CD4-positive, alpha-beta memory T cell (primary cell): ENCODE measurements at regions of chr12 and their contacts with region 1.

Region 1: DNA sequence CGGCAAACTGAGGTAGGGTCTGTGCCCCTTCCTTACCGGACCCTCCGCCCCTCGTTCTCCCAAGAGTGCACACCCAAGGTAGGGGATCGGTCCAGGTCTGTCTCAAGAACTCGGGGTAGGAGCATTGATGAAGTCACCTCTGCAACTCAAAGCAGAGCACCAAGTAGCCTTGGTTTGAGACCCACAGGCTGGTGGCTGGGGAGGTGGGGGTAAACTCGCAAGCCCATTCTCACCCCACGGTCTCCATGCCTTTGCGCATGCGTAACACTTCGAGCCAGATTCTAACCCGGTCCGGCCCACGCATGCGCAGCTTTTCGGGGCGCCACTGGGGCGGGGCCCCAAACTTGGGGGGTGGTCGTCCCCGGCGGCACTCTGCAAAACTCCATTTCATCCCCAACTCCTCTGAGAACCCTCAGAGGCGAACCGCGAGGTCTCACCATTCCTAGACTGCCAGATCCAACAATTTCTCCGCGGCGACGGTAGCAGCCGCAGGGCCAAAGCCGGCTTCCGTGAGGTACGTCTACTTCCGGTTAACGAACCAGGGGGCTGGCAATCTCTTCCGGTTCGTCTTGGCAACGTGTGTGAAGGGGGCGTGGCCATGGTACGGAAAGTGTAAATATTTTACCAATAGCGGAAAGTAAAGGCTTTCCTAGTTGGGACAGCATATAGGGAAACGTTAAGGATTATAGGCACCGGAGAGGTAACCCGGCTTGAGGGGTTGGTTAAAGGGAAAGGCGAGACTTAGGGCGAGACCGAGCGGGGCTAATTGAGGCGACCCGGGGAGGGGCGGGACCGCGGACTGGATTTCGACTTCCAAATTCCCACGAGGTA is at the start of gene MCRS1:
- DNase-seq: peak; percentile 92 to 94 (median 93)
- H3K4me3 ChIP-seq: peak within 1 kb of the TSS; percentile 88 to 100
- H3K4me3 Mint-ChIP-seq: peak within 1 kb of the TSS; percentile 92 to 100 (median 99)
- H3K27ac ChIP-seq: peak within 1 kb of the TSS; percentile 89
- H3K27ac Mint-ChIP-seq: peak within 1 kb of the TSS; percentile 93 to 100 (median 99)
- H3K4me1 ChIP-seq: peaks cover 49% of the 10 kb centered on the region
- H3K4me1 Mint-ChIP-seq: peaks cover 32 to 71% (median 54%) of the 10 kb centered on the region in 4 donors
- H3K27me3 ChIP-seq: no peaks in the 10 kb centered on the region
- H3K27me3 Mint-ChIP-seq: no peaks in the 10 kb centered on the region
- total RNA-seq, gene MCRS1: 77.0 to 78.4 TPM

Region 2: DNA sequence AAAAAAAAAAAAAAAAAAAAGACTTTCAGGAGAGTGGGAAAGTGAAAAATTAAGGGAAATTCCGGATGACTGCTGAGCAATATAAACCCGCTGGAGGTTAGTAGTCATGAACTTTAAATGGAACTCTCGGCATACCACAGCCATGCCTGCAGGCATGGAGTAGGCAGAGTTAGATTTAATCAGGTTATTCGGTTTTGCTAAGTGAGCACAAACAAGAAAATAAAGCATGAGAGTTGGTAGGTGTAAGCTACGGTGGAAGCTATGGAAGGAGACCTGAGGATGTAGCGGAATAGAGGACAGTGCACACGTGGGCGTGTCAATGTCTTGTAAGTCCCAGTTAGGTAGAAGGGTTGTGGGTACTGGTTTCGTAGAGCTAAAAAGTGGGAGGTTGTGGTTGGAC is 314.7 kb before region 1 on chr12:
- CTCF ChIA-PET with region 1: no interaction called
- POLR2A ChIA-PET with region 1: no interaction called
- intact Hi-C with region 1: no loop called
- DNase-seq: no peak
- H3K4me3 ChIP-seq: no peak overlapping the region
- H3K4me3 Mint-ChIP-seq: no peak overlapping the region
- H3K27ac ChIP-seq: no peak overlapping the region
- H3K27ac Mint-ChIP-seq: no peak overlapping the region
- H3K4me1 ChIP-seq: no peaks in the 10 kb centered on the region
- H3K4me1 Mint-ChIP-seq: peaks cover 0 to 1% (median under 1%) of the 10 kb centered on the region in 4 donors
- H3K27me3 ChIP-seq: no peaks in the 10 kb centered on the region
- H3K27me3 Mint-ChIP-seq: peaks cover 0 to 2% of the 10 kb centered on the region in 2 donors

Region 3: GRCh38 chr12:49538510-49539403 is 29.1 kb before region 1 on chr12 and contains the start of gene KCNH3:
- CTCF ChIA-PET with region 1: interaction called, 3 read pairs
- POLR2A ChIA-PET with region 1: interaction called, 19 read pairs
- intact Hi-C with region 1: loop called (anchors 1 kb)
- DNase-seq: peak; percentile 86 to 95 (median 88)
- H3K4me3 ChIP-seq: peak within 1 kb of the TSS; percentile 62 to 69
- H3K4me3 Mint-ChIP-seq: peak within 1 kb of the TSS; percentile 73 to 85 (median 79)
- H3K27ac ChIP-seq: no peak within 1 kb of the TSS
- H3K27ac Mint-ChIP-seq: peak within 1 kb of the TSS in 6 of 7 donors; percentile 46 to 70 (median 66)
- H3K4me1 ChIP-seq: peaks cover 21% of the 10 kb centered on the region
- H3K4me1 Mint-ChIP-seq: peaks cover 8 to 38% (median 19%) of the 10 kb centered on the region in 4 donors
- H3K27me3 ChIP-seq: no peaks in the 10 kb centered on the region
- H3K27me3 Mint-ChIP-seq: peaks cover 0 to 5% of the 10 kb centered on the region in 2 donors
- total RNA-seq, gene KCNH3: 1.3 to 2.4 TPM

Region 4: GRCh38 chr12:49553512-49554088 is 14.2 kb before region 1 on chr12:
- CTCF ChIA-PET with region 1: interaction called, 10 read pairs
- POLR2A ChIA-PET with region 1: interaction called, 10 read pairs
- intact Hi-C with region 1: loop called (anchors 1 kb)
- DNase-seq: peak in 4 of 5 donors; percentile 37 to 59 (median 50)
- H3K4me3 ChIP-seq: no peak overlapping the region
- H3K4me3 Mint-ChIP-seq: no peak overlapping the region
- H3K27ac ChIP-seq: no peak overlapping the region
- H3K27ac Mint-ChIP-seq: peak overlapping the region in 3 of 7 donors; percentile 14 to 54 (median 21)
- H3K4me1 ChIP-seq: peaks cover 4% of the 10 kb centered on the region
- H3K4me1 Mint-ChIP-seq: peaks cover 5 to 11% (median 8%) of the 10 kb centered on the region in 4 donors
- H3K27me3 ChIP-seq: peaks cover 3% of the 10 kb centered on the region
- H3K27me3 Mint-ChIP-seq: peaks cover 3 to 12% of the 10 kb centered on the region in 2 donors

Region 5: DNA sequence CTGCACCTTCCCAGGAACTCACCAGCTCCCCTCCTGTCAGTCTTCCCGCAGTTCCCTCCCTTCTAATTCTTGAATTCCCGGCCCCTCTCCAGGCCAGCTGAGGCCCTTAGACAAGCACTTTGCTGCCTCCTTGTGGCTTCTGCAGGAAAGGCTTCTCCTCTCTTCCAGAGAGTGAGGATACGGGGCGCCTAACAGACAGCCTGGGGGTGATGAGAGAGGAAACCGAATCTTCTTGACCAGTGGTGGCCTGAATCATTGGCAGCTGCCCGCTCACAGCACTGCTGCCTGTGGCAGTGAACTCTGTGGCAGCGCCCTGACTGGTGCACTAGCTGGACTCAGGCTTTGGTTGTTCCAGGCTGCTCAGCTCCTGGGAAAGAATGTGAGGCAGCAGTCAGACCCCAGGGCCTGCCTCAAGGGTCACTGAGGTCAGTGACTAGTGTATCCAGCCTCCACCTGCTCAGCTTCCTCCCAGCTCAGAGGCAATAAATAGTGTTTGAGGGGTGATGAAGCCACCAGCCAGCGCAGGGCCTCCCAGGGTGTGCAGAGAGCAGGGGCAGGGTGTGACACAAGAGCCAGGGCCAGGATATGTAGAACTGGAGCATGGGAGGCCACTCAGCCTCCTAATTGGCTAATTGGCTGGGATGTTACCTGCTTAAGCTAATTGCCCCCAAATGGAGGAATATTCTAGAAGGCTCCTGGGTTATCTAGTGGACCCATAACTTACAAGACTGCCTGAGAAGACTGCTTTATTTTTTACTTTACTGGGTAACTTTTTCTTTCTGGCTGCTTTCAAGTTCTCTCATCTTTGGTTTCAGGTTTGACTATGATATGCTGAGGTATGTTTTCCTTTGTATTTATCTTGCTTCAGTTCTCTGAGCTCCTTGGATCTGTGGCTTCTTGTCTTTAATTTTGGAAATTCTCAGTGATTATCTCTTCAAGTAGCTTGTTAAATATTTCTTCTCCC is 13.0 kb after region 1 on chr12:
- CTCF ChIA-PET with region 1: interaction called, 18 read pairs
- POLR2A ChIA-PET with region 1: interaction called, 3 read pairs
- intact Hi-C with region 1: no loop called
- DNase-seq: peak in 4 of 5 donors; percentile 32 to 57 (median 48)
- H3K4me3 ChIP-seq: no peak overlapping the region
- H3K4me3 Mint-ChIP-seq: no peak overlapping the region
- H3K27ac ChIP-seq: no peak overlapping the region
- H3K27ac Mint-ChIP-seq: peak overlapping the region in 3 of 7 donors; percentile 3 to 61 (median 4)
- H3K4me1 ChIP-seq: no peaks in the 10 kb centered on the region
- H3K4me1 Mint-ChIP-seq: peaks cover 0 to 7% (median 5%) of the 10 kb centered on the region in 4 donors
- H3K27me3 ChIP-seq: no peaks in the 10 kb centered on the region
- H3K27me3 Mint-ChIP-seq: no peaks in the 10 kb centered on the region